B cell (primary cell): ENCODE measurements at regions of chr2 and their contacts with region 1.

Region 1: DNA sequence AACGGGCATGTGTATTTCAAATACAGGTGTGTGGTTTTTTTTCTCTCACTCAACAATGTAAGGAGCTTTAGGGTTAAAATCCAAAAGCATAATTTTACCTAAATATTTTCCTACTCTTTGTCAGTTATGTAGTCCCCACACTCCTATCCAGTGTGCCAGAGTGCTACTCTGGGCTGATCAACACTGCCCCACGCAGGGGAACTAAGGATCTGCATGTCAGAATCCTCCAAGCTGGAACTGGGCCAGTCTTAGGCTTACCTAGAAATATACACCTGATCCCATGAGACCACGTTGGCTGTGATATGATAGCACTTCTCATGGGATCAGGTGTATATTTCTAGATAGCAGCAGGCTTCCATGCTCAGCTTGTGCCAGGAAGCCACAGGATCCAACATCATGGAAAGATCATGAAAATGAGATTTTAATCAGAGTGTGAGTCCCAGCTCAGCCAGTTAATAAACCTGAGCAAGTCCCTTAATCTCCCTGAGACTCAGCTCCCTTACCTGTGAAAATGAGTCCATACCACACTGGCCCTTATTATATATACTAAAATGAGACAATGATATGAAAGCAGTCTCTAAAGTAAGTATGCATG is 29.7 kb downstream of the CCDC141 start:
- DNase-seq: peak; percentile 60
- ATAC-seq: peak; percentile 68
- H3K4me3 ChIP-seq: no peak overlapping the region
- H3K4me3 Mint-ChIP-seq: no peak overlapping the region
- H3K27ac ChIP-seq: peak overlapping the region; percentile 0 to 12
- H3K27ac Mint-ChIP-seq: no peak overlapping the region
- H3K4me1 ChIP-seq: peaks cover 30 to 45% of the 10 kb centered on the region in 2 donors
- H3K4me1 Mint-ChIP-seq: peaks cover 52% of the 10 kb centered on the region
- H3K27me3 ChIP-seq: no peaks in the 10 kb centered on the region
- H3K27me3 Mint-ChIP-seq: no peaks in the 10 kb centered on the region
- CTCF ChIP-seq: peak; percentile 84

Region 2: DNA sequence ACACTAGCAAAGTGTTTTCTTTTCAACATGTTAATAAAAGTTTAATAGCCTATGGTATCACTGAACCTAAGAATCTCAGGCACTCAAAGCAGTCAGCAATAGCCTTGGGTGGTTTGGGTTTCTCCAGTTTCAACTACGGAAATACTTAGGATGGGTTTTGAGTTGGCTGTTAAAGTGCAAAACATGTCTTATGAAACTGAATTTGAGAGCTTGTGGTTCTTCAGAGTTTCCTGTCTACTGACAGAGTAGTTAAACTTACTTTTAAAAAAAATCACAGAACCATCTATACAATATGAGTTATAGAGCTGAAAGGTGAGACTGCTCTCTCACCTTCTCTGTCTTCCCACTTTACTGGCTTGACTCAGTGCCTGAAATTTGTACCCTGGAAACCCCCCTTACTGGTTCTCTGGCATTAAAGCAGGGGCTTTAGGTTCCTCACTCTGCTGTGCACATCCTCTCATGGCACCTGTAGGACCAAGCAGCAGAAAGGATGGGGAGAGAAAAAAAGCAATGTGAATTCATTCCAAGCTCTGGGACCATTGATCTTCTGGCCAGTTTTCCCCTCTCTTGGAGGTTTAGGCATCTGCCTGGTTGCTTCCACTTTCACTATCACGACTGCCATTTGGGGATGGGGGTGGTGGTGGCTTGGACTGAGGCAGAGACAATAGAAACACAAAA is 11.6 kb after region 1 on chr2:
- CTCF ChIA-PET with region 1: interaction called, 21 read pairs
- POLR2A ChIA-PET with region 1: interaction called, 4 read pairs
- intact Hi-C with region 1: no loop called
- DNase-seq: peak; percentile 50
- ATAC-seq: peak; percentile 76
- H3K4me3 ChIP-seq: peak overlapping the region; percentile 5 to 58 (median 33)
- H3K4me3 Mint-ChIP-seq: peak overlapping the region; percentile 86
- H3K27ac ChIP-seq: peak overlapping the region; percentile 59 to 70
- H3K27ac Mint-ChIP-seq: peak overlapping the region; percentile 96
- H3K4me1 ChIP-seq: peaks cover 13 to 14% of the 10 kb centered on the region in 2 donors
- H3K4me1 Mint-ChIP-seq: peaks cover 24% of the 10 kb centered on the region
- H3K27me3 ChIP-seq: no peaks in the 10 kb centered on the region
- H3K27me3 Mint-ChIP-seq: no peaks in the 10 kb centered on the region
- CTCF ChIP-seq: no peak

Region 3: GRCh38 chr2:179044500-179044899 is 24.2 kb after region 1 on chr2:
- CTCF ChIA-PET with region 1: interaction called, 26 read pairs
- POLR2A ChIA-PET with region 1: no interaction called
- intact Hi-C with region 1: loop called (anchors 2 kb)
- DNase-seq: peak; percentile 40
- ATAC-seq: peak; percentile 12
- H3K4me3 ChIP-seq: peak overlapping the region in 1 of 5 experiments; percentile 40
- H3K4me3 Mint-ChIP-seq: peak overlapping the region; percentile 80
- H3K27ac ChIP-seq: peak overlapping the region; percentile 8 to 33
- H3K27ac Mint-ChIP-seq: peak overlapping the region; percentile 57
- H3K4me1 ChIP-seq: peaks cover 37 to 44% of the 10 kb centered on the region in 2 donors
- H3K4me1 Mint-ChIP-seq: peaks cover 63% of the 10 kb centered on the region
- H3K27me3 ChIP-seq: no peaks in the 10 kb centered on the region
- H3K27me3 Mint-ChIP-seq: no peaks in the 10 kb centered on the region
- CTCF ChIP-seq: no peak

Region 4: DNA sequence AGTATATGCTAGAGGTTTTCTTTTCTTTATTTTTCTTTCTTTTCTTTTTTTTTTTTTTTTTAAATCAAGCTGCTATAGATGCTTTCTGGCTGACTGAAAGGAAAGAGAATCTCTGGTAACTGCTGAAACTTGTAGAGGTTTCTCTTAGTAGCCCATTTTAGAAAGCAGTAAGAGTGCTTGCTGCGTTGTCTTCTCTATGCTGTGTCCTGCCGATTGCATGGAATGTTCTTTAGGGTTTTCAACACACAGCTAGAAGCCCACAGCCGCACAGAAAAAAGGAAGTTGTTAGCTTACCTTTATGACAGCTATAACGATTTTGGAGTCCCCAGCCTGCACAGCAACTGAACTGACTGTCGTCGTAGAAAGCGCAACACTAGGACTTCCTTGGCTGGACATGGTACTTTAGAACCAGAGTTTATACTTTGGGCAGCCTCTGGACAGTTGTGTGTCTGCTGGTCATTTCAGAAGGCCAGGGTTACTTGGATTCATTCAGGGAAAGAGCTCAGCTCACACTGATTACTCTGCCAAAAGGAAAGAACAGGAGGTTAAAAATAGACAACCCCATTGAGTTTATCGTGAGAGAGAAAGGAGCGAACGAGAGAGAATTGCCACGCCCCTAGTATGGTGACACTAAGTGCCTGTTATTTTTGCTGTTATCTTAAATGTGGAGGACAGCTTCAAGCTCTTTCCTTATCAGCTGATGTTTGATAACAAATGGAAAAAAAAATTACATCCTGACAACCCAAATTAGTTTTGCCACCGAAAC is 29.5 kb after region 1 on chr2 and contains the start of gene CCDC141:
- CTCF ChIA-PET with region 1: interaction called, 26 read pairs
- POLR2A ChIA-PET with region 1: no interaction called
- intact Hi-C with region 1: loop called (anchors 2 kb)
- DNase-seq: peak; percentile 72
- ATAC-seq: peak; percentile 82
- H3K4me3 ChIP-seq: peak within 1 kb of the TSS; percentile 46 to 83 (median 70)
- H3K4me3 Mint-ChIP-seq: peak within 1 kb of the TSS; percentile 94
- H3K27ac ChIP-seq: peak within 1 kb of the TSS; percentile 81 to 82
- H3K27ac Mint-ChIP-seq: peak within 1 kb of the TSS; percentile 95
- H3K4me1 ChIP-seq: peaks cover 38 to 44% of the 10 kb centered on the region in 2 donors
- H3K4me1 Mint-ChIP-seq: peaks cover 56% of the 10 kb centered on the region
- H3K27me3 ChIP-seq: no peaks in the 10 kb centered on the region
- H3K27me3 Mint-ChIP-seq: no peaks in the 10 kb centered on the region
- CTCF ChIP-seq: no peak
- total RNA-seq, gene CCDC141: 42.1 and 47.5 TPM in 2 replicates

Region 5: GRCh38 chr2:179059026-179059700 is 38.9 kb after region 1 on chr2:
- CTCF ChIA-PET with region 1: interaction called, 11 read pairs
- POLR2A ChIA-PET with region 1: no interaction called
- intact Hi-C with region 1: no loop called
- DNase-seq: peak; percentile 36
- ATAC-seq: peak; percentile 60
- H3K4me3 ChIP-seq: no peak overlapping the region
- H3K4me3 Mint-ChIP-seq: no peak overlapping the region
- H3K27ac ChIP-seq: peak overlapping the region in 1 of 2 donors; percentile 64
- H3K27ac Mint-ChIP-seq: peak overlapping the region; percentile 66
- H3K4me1 ChIP-seq: peaks cover 18 to 19% of the 10 kb centered on the region in 2 donors
- H3K4me1 Mint-ChIP-seq: peaks cover 21% of the 10 kb centered on the region
- H3K27me3 ChIP-seq: no peaks in the 10 kb centered on the region
- H3K27me3 Mint-ChIP-seq: no peaks in the 10 kb centered on the region
- CTCF ChIP-seq: no peak

Region 6: GRCh38 chr2:179071810-179072355 is 51.6 kb after region 1 on chr2:
- CTCF ChIA-PET with region 1: no interaction called
- POLR2A ChIA-PET with region 1: no interaction called
- intact Hi-C with region 1: no loop called
- DNase-seq: no peak
- ATAC-seq: no peak
- H3K4me3 ChIP-seq: no peak overlapping the region
- H3K4me3 Mint-ChIP-seq: no peak overlapping the region
- H3K27ac ChIP-seq: no peak overlapping the region
- H3K27ac Mint-ChIP-seq: no peak overlapping the region
- H3K4me1 ChIP-seq: no peaks in the 10 kb centered on the region
- H3K4me1 Mint-ChIP-seq: no peaks in the 10 kb centered on the region
- H3K27me3 ChIP-seq: no peaks in the 10 kb centered on the region
- H3K27me3 Mint-ChIP-seq: no peaks in the 10 kb centered on the region
- CTCF ChIP-seq: no peak

Region 7: GRCh38 chr2:180006781-180007579 is 986.7 kb after region 1 on chr2 and contains the start of gene CWC22:
- CTCF ChIA-PET with region 1: no interaction called
- POLR2A ChIA-PET with region 1: no interaction called
- intact Hi-C with region 1: loop called (anchors 10 kb)
- DNase-seq: peak; percentile 96
- ATAC-seq: peak; percentile 95
- H3K4me3 ChIP-seq: peak within 1 kb of the TSS; percentile 89 to 98 (median 91)
- H3K4me3 Mint-ChIP-seq: peak within 1 kb of the TSS; percentile 94
- H3K27ac ChIP-seq: peak within 1 kb of the TSS; percentile 88 to 99
- H3K27ac Mint-ChIP-seq: peak within 1 kb of the TSS; percentile 99
- H3K4me1 ChIP-seq: peaks cover 12 to 18% of the 10 kb centered on the region in 2 donors
- H3K4me1 Mint-ChIP-seq: peaks cover 39% of the 10 kb centered on the region
- H3K27me3 ChIP-seq: no peaks in the 10 kb centered on the region
- H3K27me3 Mint-ChIP-seq: no peaks in the 10 kb centered on the region
- CTCF ChIP-seq: no peak
- total RNA-seq, gene CWC22: 28.6 and 28.7 TPM in 2 replicates